ENCODE measurements at regions of chr2 and their contacts with region 1.

Region 1: DNA sequence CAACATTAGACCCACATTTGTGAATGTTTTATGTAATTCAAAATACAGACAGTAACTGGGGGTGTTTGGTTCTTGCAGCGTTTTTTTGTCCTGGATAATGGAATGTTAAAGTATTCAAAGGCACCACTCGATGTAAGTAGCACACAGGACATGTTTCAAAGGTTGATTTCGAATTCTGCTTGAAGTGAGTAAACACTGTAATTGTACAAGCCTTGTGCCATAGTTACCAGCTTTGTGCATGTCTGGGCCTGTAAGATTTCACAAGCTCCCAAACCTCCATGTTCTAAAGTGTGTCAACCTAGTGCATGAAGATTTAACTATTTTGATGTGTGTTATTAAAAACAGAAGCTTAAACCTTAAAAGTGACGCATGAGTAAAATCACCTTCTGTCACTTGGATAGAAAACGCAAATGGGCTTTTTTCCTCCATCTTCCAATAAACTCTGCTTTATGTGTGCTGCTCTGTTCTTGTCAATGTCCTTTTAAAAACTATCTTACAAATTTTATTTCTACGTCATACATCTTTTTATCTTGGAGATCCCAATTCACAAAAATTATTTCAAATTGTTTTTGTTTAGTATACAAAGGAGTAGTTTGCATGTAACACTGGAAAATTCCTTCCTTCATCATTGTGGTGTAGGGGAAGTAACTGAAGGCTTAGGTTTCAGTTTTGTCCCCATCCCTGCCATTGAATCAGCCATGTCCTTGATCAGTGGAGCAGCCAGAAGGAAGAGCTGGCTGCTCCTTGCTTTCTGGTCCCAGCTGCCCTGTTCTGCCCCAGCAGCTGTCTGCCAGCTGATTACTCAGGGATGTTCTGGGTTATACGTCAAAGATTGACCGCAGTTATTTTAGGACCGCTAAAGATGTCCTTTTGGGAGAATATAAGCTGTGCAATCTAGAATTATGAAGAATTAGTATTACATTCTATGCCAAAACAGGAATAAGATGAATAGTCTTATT is 119.2 kb downstream of the PRKRA start:
- DNase-seq: peak; percentile 70
- ATAC-seq: peak; percentile 92
- H3K4me3 ChIP-seq: no peak overlapping the region
- H3K27ac ChIP-seq: no peak overlapping the region
- H3K4me1 ChIP-seq: peaks cover 48% of the 10 kb centered on the region
- H3K27me3 ChIP-seq: peaks cover 0 to 3% of the 10 kb centered on the region in 2 experiments; a peak in 1 of 5 replicates
- CTCF ChIP-seq: no peak
- EP300 ChIP-seq: peak in 1 of 2 experiments; percentile 53; a peak in 1 of 4 replicates
- POLR2A ChIP-seq: no peak
- RAD21 ChIP-seq: no peak

Region 2: GRCh38 chr2:178345951-178346350 is 14.2 kb after region 1 on chr2:
- CTCF ChIA-PET with region 1: no interaction called
- POLR2A ChIA-PET with region 1: no interaction called
- in situ Hi-C with region 1: no loop called
- intact Hi-C with region 1: loop called (anchors 1 kb)
- DNase-seq: no peak
- ATAC-seq: no peak
- H3K4me3 ChIP-seq: no peak overlapping the region
- H3K27ac ChIP-seq: no peak overlapping the region
- H3K4me1 ChIP-seq: peaks cover 9% of the 10 kb centered on the region
- H3K27me3 ChIP-seq: no peaks in the 10 kb centered on the region
- CTCF ChIP-seq: no peak
- EP300 ChIP-seq: no peak
- POLR2A ChIP-seq: no peak
- RAD21 ChIP-seq: no peak

Measured in HepG2 (cell line).